Vagina (tissue), 2 donors: ENCODE measurements at regions of chr6 and their contacts with region 1.

Region 1: GRCh38 chr6:160455541-160456213 is 107.5 kb downstream of the SLC22A3 start:
- DNase-seq: no peak
- H3K4me3 ChIP-seq: peak overlapping the region in 1 of 2 donors; percentile 36
- H3K27ac ChIP-seq: peak overlapping the region; percentile 68
- H3K4me1 ChIP-seq: peaks cover 10% of the 10 kb centered on the region
- H3K27me3 ChIP-seq: no peaks in the 10 kb centered on the region
- CTCF ChIP-seq: peak; percentile 90 to 98 (median 91)
- POLR2A ChIP-seq: no peak

Region 2: GRCh38 chr6:160088069-160088783 is 367.5 kb before region 1 on chr6:
- intact Hi-C with region 1: loop called (anchors 5 kb)
- DNase-seq: no peak
- H3K4me3 ChIP-seq: no peak overlapping the region
- H3K27ac ChIP-seq: peak overlapping the region; percentile 62
- H3K4me1 ChIP-seq: peaks cover 5% of the 10 kb centered on the region
- H3K27me3 ChIP-seq: no peaks in the 10 kb centered on the region
- CTCF ChIP-seq: peak in 2 of 3 experiments; percentile 35 to 75
- POLR2A ChIP-seq: no peak

Region 3: DNA sequence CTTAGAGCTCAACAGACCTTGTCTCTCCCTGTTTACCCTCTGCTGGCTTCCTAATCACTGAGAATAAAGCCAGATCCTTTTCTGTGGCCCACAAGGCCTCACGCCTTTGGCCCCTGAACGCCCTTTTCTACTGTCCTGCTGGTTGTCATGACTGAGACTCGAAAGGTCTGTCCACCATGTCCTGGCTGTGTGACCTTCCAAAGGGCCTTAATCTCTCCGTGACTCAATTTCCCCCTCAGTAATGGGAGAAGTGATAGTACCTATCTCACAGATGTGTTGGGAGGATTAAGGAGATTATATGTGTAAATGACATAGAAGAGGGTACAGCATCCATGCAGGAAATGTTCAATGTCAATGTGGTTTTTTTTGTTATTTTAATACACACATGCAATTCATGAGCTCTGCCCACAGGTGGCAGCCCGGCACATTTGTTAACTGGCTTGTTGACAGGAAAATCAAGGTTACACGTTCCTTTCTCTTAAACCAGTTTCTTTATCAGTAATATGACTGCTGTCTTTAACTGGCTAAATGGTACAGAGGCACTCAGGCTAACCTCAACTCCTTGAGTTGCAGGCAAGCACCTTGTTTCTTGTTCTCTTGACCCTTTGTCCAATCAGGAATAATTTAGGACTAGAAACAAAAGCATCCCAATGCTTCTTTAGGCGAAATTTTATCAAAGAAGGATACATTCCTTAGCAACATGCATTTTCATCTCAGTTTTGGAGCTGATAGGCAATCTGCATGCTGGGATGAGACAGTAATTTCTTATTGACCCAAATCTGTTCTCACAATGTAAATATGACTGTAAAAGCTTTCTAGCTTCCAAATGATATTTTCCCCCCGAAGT is 317.5 kb before region 1 on chr6:
- intact Hi-C with region 1: loop called (anchors 5 kb)
- DNase-seq: no peak
- H3K4me3 ChIP-seq: no peak overlapping the region
- H3K27ac ChIP-seq: peak overlapping the region; percentile 68
- H3K4me1 ChIP-seq: peaks cover 32% of the 10 kb centered on the region
- H3K27me3 ChIP-seq: no peaks in the 10 kb centered on the region
- CTCF ChIP-seq: peak; percentile 56 to 63 (median 61)
- POLR2A ChIP-seq: no peak

Region 4: GRCh38 chr6:160534050-160534696 is 78.5 kb after region 1 on chr6:
- intact Hi-C with region 1: loop called (anchors 2 kb)
- DNase-seq: no peak
- H3K4me3 ChIP-seq: peak overlapping the region in 1 of 2 donors; percentile 18
- H3K27ac ChIP-seq: no peak overlapping the region
- H3K4me1 ChIP-seq: no peaks in the 10 kb centered on the region
- H3K27me3 ChIP-seq: no peaks in the 10 kb centered on the region
- CTCF ChIP-seq: peak; percentile 70 to 95 (median 93)
- POLR2A ChIP-seq: no peak